ENCODE measurements at regions of chr7 and their contacts with region 1.

Region 1: DNA sequence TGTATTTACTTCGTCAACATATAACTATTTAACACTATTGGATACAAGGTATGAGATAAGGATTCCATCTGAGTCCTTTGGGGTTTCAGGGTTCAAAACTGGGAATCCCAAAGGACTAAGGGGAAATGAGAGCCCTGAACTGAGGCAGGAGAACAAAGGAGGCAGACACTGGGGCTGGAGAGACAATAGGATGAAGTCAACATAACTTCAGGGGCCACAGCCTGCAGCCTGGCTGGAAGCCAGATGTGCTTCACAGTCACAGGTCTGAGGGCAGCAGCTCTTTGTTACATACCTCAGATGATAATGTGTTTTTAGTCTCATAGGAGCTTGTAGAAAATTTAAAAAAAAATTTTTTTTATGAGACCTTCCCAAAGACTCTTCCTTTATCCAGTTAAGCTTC is 73.3 kb downstream of the NRF1 start:
- DNase-seq: no peak
- H3K4me3 ChIP-seq: no peak overlapping the region
- H3K27ac ChIP-seq: no peak overlapping the region
- H3K4me1 ChIP-seq: no peaks in the 10 kb centered on the region
- H3K27me3 ChIP-seq: no peaks in the 10 kb centered on the region

Region 2: GRCh38 chr7:129163875-129164544 is 520.8 kb before region 1 on chr7:
- in situ Hi-C with region 1: no loop called
- DNase-seq: peak; percentile 72
- H3K4me3 ChIP-seq: no peak overlapping the region
- H3K27ac ChIP-seq: no peak overlapping the region
- H3K4me1 ChIP-seq: no peaks in the 10 kb centered on the region
- H3K27me3 ChIP-seq: 0 out of 2 replicates have a peak, but pooled peaks cover 7% of the 10 kb centered on the region

Region 3: GRCh38 chr7:129626896-129627295 is 57.9 kb before region 1 on chr7:
- in situ Hi-C with region 1: no loop called
- DNase-seq: no peak
- H3K4me3 ChIP-seq: no peak overlapping the region
- H3K27ac ChIP-seq: no peak overlapping the region
- H3K4me1 ChIP-seq: no peaks in the 10 kb centered on the region
- H3K27me3 ChIP-seq: no peaks in the 10 kb centered on the region

Region 4: GRCh38 chr7:129816742-129817141 is 132.0 kb after region 1 on chr7:
- in situ Hi-C with region 1: loop called (anchors 10 kb)
- DNase-seq: no peak
- H3K4me3 ChIP-seq: no peak overlapping the region
- H3K27ac ChIP-seq: no peak overlapping the region
- H3K4me1 ChIP-seq: no peaks in the 10 kb centered on the region
- H3K27me3 ChIP-seq: no peaks in the 10 kb centered on the region